ENCODE measurements at regions of chr21 and their contacts with region 1.

Region 1: GRCh38 chr21:17925000-17925610 is 105.9 kb upstream of the C21orf91 start:
- DNase-seq: peak; percentile 46 to 58 (median 50)
- H3K4me3 ChIP-seq: no peak overlapping the region
- H3K4me3 Mint-ChIP-seq: no peak overlapping the region
- H3K27ac ChIP-seq: no peak overlapping the region
- H3K27ac Mint-ChIP-seq: no peak overlapping the region
- H3K4me1 ChIP-seq: peaks cover 4% of the 10 kb centered on the region
- H3K4me1 Mint-ChIP-seq: peaks cover 0 to 6% (median 2%) of the 10 kb centered on the region in 4 donors
- H3K27me3 ChIP-seq: no peaks in the 10 kb centered on the region
- H3K27me3 Mint-ChIP-seq: peaks cover 0 to 4% of the 10 kb centered on the region in 2 donors

Region 2: DNA sequence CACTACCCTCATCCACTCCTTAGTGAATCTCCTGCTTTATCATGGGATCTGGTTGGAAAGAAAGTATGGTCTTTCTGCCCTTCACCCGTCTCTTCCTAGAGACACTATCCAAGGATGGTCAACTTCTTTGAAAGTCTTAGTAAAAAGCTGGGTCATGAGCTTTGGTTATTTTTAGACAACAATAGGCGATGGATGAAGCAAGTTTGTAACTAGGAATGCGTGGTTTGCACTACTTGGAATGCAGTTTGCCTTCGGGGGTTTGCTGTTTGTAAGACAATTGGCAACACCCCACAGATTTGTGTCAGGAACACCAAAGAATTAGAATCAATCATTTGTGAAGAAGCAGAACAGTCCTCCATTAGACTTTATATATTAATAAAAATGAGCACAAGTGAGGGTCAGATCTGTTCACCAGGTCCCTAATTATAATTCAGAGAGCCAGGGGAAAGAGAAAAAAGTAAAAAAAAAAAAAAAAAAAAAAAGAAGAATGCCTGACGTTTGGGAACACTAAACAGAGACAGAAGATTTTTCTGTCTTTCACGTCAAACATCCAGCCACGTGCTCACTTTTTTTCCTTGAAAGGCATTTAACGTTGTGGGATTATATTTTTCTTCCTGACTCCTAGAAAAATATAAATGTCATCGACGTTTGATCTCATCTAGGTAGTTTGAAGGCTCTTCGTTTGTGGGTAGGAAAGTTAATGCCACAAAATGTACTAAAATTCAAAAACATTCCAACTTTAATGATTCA is 251.7 kb before region 1 on chr21:
- CTCF ChIA-PET with region 1: interaction called, 49 read pairs
- POLR2A ChIA-PET with region 1: no interaction called
- intact Hi-C with region 1: no loop called
- DNase-seq: no peak
- H3K4me3 ChIP-seq: no peak overlapping the region
- H3K4me3 Mint-ChIP-seq: no peak overlapping the region
- H3K27ac ChIP-seq: no peak overlapping the region
- H3K27ac Mint-ChIP-seq: no peak overlapping the region
- H3K4me1 ChIP-seq: no peaks in the 10 kb centered on the region
- H3K4me1 Mint-ChIP-seq: no peaks in the 10 kb centered on the region
- H3K27me3 ChIP-seq: no peaks in the 10 kb centered on the region
- H3K27me3 Mint-ChIP-seq: peaks cover 0 to 7% of the 10 kb centered on the region in 2 donors

Region 3: DNA sequence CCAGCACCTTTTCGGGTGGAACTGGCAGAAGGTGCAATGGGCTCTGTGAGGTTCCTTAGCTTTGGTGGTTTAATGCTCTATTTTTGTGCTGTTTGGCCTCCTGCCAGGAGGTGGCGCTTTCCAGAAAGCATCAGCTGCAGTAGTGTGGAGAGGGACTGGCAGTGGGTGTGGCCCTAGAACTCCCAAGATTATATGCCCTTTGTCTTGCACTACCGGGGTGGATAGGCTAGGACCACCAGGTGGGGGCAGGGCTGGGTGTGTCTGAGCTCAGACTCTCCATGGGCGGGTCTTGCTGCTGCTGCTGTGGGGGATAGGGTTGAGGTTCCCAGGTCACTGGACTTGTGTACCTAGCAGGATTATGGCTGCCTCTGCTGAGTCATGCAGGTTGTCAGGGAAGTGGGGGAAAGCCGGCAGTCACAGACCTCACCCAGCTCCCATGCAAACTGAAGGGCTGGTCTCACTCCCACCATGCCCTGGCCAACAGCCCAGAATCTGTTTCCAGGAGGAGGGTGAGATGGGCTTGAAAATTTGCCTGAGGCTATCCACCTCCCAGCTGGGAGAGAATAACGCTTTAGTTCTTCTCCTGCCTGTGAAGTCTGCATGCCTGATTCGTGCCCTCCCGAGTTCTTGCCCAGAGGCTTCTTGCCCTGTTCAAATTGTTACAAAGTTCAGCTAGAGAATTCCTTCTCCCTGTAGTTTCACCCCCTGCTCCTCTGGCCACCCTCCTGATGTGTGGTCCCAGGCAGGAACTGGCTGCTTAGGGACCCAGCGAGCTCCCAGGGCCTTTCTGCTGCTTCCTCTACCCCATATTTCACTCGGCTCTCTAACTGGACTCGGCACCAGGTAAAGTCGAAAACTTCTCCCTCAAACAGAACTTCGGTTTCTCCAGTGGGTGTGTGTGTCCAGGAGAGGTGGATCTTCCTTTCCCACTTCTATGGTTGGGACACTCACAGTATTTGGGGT is 235.9 kb before region 1 on chr21:
- CTCF ChIA-PET with region 1: interaction called, 29 read pairs
- POLR2A ChIA-PET with region 1: no interaction called
- intact Hi-C with region 1: no loop called
- DNase-seq: peak; percentile 35 to 59 (median 43)
- H3K4me3 ChIP-seq: no peak overlapping the region
- H3K4me3 Mint-ChIP-seq: peak overlapping the region in 4 of 8 donors; percentile 9 to 35 (median 20)
- H3K27ac ChIP-seq: no peak overlapping the region
- H3K27ac Mint-ChIP-seq: peak overlapping the region in 4 of 7 donors; percentile 18 to 66 (median 52)
- H3K4me1 ChIP-seq: peaks cover 27% of the 10 kb centered on the region
- H3K4me1 Mint-ChIP-seq: peaks cover 29 to 51% (median 39%) of the 10 kb centered on the region in 4 donors
- H3K27me3 ChIP-seq: no peaks in the 10 kb centered on the region
- H3K27me3 Mint-ChIP-seq: no peaks in the 10 kb centered on the region

Region 4: DNA sequence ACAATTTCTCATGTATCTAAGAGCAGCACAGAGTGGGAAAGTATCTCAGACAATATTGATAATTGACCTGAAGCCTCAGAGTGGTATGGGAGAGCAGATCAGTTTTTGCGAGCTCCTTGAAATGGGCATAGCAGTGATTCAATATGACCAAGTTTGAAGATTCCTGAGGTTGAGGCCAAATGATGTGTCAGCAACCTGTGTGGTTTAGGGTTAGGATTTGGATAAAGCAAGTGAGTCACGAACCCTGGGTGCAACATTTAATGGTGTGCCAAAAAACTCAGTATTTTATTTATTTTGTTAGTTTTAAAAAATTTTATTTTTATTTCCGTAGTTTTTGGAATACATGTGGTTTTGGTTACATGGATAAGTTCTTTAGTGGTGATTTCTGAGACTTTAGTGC is 13.5 kb before region 1 on chr21:
- CTCF ChIA-PET with region 1: interaction called, 45 read pairs
- POLR2A ChIA-PET with region 1: no interaction called
- intact Hi-C with region 1: no loop called
- DNase-seq: no peak
- H3K4me3 ChIP-seq: no peak overlapping the region
- H3K4me3 Mint-ChIP-seq: no peak overlapping the region
- H3K27ac ChIP-seq: no peak overlapping the region
- H3K27ac Mint-ChIP-seq: no peak overlapping the region
- H3K4me1 ChIP-seq: no peaks in the 10 kb centered on the region
- H3K4me1 Mint-ChIP-seq: no peaks in the 10 kb centered on the region
- H3K27me3 ChIP-seq: peaks cover 3% of the 10 kb centered on the region
- H3K27me3 Mint-ChIP-seq: peaks cover 3 to 9% of the 10 kb centered on the region in 2 donors